ENCODE measurements at regions of chr5 and their contacts with region 1.

Region 1: GRCh38 chr5:81971712-81972495 is at the start of gene ATG10:
- DNase-seq: peak; percentile 77 to 98 (median 95)

Region 2: GRCh38 chr5:82107267-82107666 is 135.4 kb after region 1 on chr5:
- intact Hi-C with region 1: loop called (anchors 10 kb)
- DNase-seq: peak in 3 of 42 donors; percentile 17 to 20 (median 18)